H1 (cell line): ENCODE measurements at regions of chr4 and their contacts with region 1.

Region 1: DNA sequence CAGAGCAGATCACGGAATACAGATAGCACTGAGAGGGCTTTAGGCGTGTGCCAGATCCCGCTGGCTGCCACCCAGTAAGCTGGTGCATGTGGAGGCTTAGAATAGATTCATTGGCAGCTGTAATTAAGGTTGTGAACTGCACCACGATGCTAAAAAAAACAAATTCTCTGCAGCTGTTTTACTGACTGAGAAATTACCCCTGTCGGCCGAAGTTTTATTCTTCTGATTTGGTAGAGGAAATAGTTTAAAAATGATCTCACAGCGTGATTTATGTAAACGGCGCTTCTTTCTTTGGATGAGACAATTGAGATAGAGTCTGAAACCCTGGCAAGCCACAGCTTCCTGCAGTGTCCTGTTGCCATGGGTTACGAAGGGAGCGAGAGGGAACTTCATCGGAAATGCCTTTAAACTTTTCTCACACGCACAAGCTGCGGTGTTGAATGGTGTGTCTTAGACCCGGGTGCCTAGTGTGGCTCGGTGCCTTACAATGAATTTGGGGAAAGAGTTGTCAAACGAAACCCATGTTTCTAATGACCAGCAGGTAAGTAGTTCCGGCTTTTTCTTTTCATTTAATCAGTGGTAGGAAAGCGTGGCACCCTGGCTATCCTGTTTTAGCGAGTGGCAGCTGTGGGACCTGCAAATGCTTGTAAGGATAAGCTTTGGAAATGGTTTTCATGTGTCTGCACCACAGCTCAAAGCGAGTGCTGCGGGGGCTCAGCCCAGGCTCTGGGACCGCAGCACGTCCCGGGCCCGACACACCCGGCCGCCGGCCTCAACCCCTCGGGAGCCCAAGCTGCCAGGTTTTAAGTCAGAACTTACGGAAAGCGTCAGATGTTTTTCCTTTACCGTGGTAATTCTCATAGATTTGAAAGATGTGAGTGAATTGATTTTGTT is 71.7 kb upstream of the HGFAC start:
- DNase-seq: peak in 1 of 2 experiments; percentile 54
- H3K4me3 ChIP-seq: peak overlapping the region in 3 of 4 experiments; percentile 8 to 47 (median 14); a peak in 5 of 8 replicates
- H3K27ac ChIP-seq: no peak overlapping the region
- H3K4me1 ChIP-seq: peaks cover 7 to 33% (median 21%) of the 10 kb centered on the region in 4 experiments
- H3K27me3 ChIP-seq: peaks cover 0 to 13% (median 10%) of the 10 kb centered on the region in 4 experiments; a peak in 3 of 7 replicates
- CTCF ChIP-seq: no peak
- EP300 ChIP-seq: no peak
- POLR2A ChIP-seq: no peak
- RAD21 ChIP-seq: no peak

Region 2: GRCh38 chr4:3388471-3389232 is 18.6 kb after region 1 on chr4:
- CTCF ChIA-PET with region 1: interaction called, 10 read pairs
- POLR2A ChIA-PET with region 1: interaction called, 3 read pairs
- DNase-seq: peak in 1 of 2 experiments; percentile 57
- H3K4me3 ChIP-seq: no peak overlapping the region
- H3K27ac ChIP-seq: no peak overlapping the region
- H3K4me1 ChIP-seq: peaks cover 0 to 38% (median 21%) of the 10 kb centered on the region in 4 experiments; a peak in 6 of 7 replicates
- H3K27me3 ChIP-seq: no peaks in the 10 kb centered on the region; a peak in 1 of 7 replicates
- CTCF ChIP-seq: no peak
- EP300 ChIP-seq: no peak
- POLR2A ChIP-seq: no peak
- RAD21 ChIP-seq: no peak

Region 3: DNA sequence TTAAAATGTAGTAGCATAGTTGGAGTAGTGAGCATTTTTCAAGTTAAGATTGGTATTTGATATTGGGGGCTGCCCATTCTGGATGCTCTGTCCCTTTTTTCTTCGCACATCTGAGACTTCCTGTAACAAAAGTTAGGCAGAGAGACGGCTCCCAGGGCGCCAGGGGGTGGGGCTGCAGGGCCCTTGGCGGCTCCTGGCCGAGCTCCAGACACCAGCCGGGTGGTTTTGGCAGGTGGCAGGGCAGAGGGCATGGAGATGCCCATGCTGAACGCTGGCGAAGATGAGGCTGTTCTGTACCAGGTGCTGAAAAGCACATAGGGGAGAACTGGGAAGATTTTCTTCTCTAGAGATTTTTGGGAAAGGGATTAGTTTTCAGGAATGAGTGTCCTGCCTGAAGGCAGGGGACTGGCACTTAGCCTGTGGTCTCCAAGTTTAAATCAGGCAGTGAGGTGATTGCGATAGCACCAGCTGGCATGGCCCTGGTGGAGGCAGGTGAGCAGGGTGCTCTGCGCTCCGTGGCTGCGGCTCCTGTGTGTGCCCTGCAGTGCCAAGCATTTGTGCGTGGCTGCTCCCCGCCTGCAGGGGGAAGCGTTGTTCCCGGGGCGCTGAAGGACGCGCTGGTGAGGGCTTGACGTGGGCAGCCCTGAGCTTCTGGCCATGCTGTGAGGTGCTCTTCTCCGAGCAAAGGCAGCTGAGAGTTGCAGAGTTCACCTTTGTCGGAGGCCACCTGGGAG is 48.2 kb after region 1 on chr4:
- CTCF ChIA-PET with region 1: interaction called, 24 read pairs
- POLR2A ChIA-PET with region 1: no interaction called
- DNase-seq: no peak
- H3K4me3 ChIP-seq: no peak overlapping the region
- H3K27ac ChIP-seq: no peak overlapping the region
- H3K4me1 ChIP-seq: no peaks in the 10 kb centered on the region; a peak in 3 of 7 replicates
- H3K27me3 ChIP-seq: no peaks in the 10 kb centered on the region
- CTCF ChIP-seq: peak in 2 of 3 experiments; percentile 45 to 74; a peak in 3 of 4 replicates
- EP300 ChIP-seq: no peak
- POLR2A ChIP-seq: no peak
- RAD21 ChIP-seq: peak; percentile 32 to 43; a peak in 3 of 4 replicates

Region 4: DNA sequence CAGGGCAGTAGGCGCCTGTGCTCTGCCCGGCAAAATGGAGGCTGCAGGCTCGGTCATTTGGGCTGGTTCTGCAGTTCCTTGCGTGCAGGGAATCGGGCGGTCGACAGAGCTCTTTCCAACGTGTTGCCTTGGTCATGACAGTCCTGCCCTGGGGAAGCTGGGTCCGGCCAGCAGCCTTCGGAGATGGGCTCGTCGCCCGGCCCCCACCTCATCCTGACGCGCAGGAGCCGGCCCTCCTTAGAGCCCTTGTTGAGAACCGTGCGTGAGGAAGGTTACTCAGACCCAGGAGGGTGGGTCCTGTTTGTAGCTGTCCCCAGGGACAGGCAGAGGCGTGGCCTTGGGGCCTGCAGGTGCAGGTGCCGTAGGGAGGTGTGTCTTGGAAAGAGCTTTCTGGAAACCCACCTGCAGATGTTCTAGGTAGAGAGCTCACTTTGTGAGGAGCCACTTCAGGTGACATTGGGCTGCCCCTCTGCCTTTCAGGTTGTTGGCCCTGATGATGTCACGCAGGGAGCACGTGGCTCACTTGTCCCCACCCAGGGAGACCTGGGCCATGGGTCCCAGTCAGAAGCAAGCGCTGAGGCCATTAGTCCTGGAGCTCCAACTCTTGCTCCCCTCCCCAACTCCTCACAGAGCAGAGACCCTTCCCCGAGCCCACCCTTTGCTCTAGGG is 56.6 kb after region 1 on chr4:
- CTCF ChIA-PET with region 1: interaction called, 10 read pairs
- POLR2A ChIA-PET with region 1: no interaction called
- DNase-seq: no peak
- H3K4me3 ChIP-seq: no peak overlapping the region
- H3K27ac ChIP-seq: no peak overlapping the region
- H3K4me1 ChIP-seq: no peaks in the 10 kb centered on the region; a peak in 1 of 7 replicates
- H3K27me3 ChIP-seq: no peaks in the 10 kb centered on the region; a peak in 1 of 7 replicates
- CTCF ChIP-seq: no peak
- EP300 ChIP-seq: no peak
- POLR2A ChIP-seq: no peak
- RAD21 ChIP-seq: no peak

Region 5: GRCh38 chr4:3508542-3508941 is 138.5 kb after region 1 on chr4:
- CTCF ChIA-PET with region 1: no interaction called
- POLR2A ChIA-PET with region 1: no interaction called
- DNase-seq: no peak
- H3K4me3 ChIP-seq: no peak overlapping the region
- H3K27ac ChIP-seq: no peak overlapping the region
- H3K4me1 ChIP-seq: no peaks in the 10 kb centered on the region
- H3K27me3 ChIP-seq: peaks cover 0 to 3% (median 0%) of the 10 kb centered on the region in 4 experiments; a peak in 1 of 7 replicates
- CTCF ChIP-seq: no peak
- EP300 ChIP-seq: no peak
- POLR2A ChIP-seq: no peak
- RAD21 ChIP-seq: no peak